ENCODE measurements at regions of chr9 and their contacts with region 1.

Region 1: DNA sequence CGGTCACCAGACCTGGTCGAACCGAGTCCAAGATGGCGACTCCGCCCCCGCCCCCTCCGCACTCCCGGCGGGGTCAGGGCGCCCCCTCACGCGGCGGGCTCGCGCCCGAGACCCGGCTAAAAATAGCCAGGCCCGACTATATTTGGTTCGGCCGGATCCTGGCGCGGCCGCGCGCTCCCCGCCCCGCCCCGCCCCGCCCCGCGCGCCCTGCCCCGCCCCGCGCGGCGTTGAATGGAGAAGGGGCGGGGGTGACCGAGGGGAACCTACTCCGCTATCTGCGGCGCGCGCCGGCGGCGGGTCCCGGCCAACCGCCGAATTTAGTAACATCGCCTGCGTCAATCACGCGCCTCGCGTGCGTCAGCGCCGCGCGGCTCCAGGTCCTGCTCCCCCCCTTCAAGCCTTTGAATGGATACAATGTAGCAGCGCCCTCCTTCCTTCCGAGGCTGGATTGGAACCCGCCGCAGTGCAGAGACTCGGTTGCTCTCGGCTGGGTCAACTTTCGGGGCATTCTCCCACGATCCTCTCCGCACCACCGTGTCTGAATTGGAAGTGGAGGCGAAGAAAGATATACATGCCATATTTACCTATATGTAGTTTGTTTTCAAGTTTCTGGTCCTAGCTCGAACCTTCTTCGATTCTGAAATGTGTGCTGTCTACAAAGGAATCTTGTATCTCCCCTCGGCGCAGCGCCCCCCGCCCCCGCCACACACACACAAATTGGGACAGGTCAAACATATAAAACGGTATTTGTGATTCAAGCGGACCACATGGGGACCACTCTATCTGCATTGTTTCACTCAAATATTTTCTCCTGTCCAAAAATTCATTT is 1.6 kb upstream of the NR4A3 start:
- DNase-seq: peak; percentile 89 to 94 (median 92)
- ATAC-seq: peak; percentile 72
- H3K4me3 ChIP-seq: peak overlapping the region; percentile 57 to 74
- H3K27ac ChIP-seq: peak overlapping the region; percentile 95 to 99 (median 98)
- H3K4me1 ChIP-seq: peaks cover 39% of the 10 kb centered on the region
- H3K27me3 ChIP-seq: peaks cover 0 to 8% of the 10 kb centered on the region in 2 donors
- CTCF ChIP-seq: no peak
- POLR2A ChIP-seq: peak in 1 of 3 donors; percentile 33

Region 2: GRCh38 chr9:99221621-99222415 is 598.3 kb before region 1 on chr9 and contains the starts of genes ALG2 and SEC61B:
- intact Hi-C with region 1: loop called (anchors 10 kb)
- DNase-seq: peak; percentile 94 to 96 (median 96)
- ATAC-seq: peak; percentile 94
- H3K4me3 ChIP-seq: peak within 1 kb of the TSS; percentile 88 to 98
- H3K27ac ChIP-seq: peak within 1 kb of the TSS; percentile 94 to 99 (median 96)
- H3K4me1 ChIP-seq: peaks cover 75% of the 10 kb centered on the region
- H3K27me3 ChIP-seq: no peaks in the 10 kb centered on the region
- CTCF ChIP-seq: peak in 4 of 7 experiments; percentile 18 to 26 (median 23)
- POLR2A ChIP-seq: peak; percentile 82 to 96 (median 94)
- total RNA-seq, gene ALG2: 52.1 to 58.6 TPM
- total RNA-seq, gene SEC61B: 86.6 to 104 TPM

Region 3: GRCh38 chr9:99762470-99762869 is 57.6 kb before region 1 on chr9:
- intact Hi-C with region 1: no loop called
- DNase-seq: no peak
- ATAC-seq: no peak
- H3K4me3 ChIP-seq: no peak overlapping the region
- H3K27ac ChIP-seq: no peak overlapping the region
- H3K4me1 ChIP-seq: no peaks in the 10 kb centered on the region
- H3K27me3 ChIP-seq: no peaks in the 10 kb centered on the region
- CTCF ChIP-seq: no peak
- POLR2A ChIP-seq: no peak

Region 4: GRCh38 chr9:99778308-99778707 is 41.8 kb before region 1 on chr9:
- intact Hi-C with region 1: no loop called
- DNase-seq: no peak
- ATAC-seq: no peak
- H3K4me3 ChIP-seq: no peak overlapping the region
- H3K27ac ChIP-seq: no peak overlapping the region
- H3K4me1 ChIP-seq: no peaks in the 10 kb centered on the region
- H3K27me3 ChIP-seq: no peaks in the 10 kb centered on the region
- CTCF ChIP-seq: no peak
- POLR2A ChIP-seq: no peak

Region 5: GRCh38 chr9:99906403-99907207 is 86.5 kb after region 1 on chr9 and contains the start of gene STX17:
- intact Hi-C with region 1: loop called (anchors 10 kb)
- DNase-seq: peak; percentile 75 to 84 (median 77)
- ATAC-seq: peak; percentile 89
- H3K4me3 ChIP-seq: peak within 1 kb of the TSS; percentile 47 to 91
- H3K27ac ChIP-seq: peak within 1 kb of the TSS; percentile 94 to 100 (median 98)
- H3K4me1 ChIP-seq: peaks cover 18% of the 10 kb centered on the region
- H3K27me3 ChIP-seq: no peaks in the 10 kb centered on the region
- CTCF ChIP-seq: peak in 1 of 7 experiments; percentile 4
- POLR2A ChIP-seq: peak; percentile 82 to 93 (median 90)
- total RNA-seq, gene STX17: 29.8 to 73.2 TPM

Region 6: GRCh38 chr9:99977033-99977792 is 157.1 kb after region 1 on chr9:
- intact Hi-C with region 1: no loop called
- DNase-seq: no peak
- ATAC-seq: peak; percentile 50
- H3K4me3 ChIP-seq: no peak overlapping the region
- H3K27ac ChIP-seq: no peak overlapping the region
- H3K4me1 ChIP-seq: no peaks in the 10 kb centered on the region
- H3K27me3 ChIP-seq: no peaks in the 10 kb centered on the region
- CTCF ChIP-seq: no peak
- POLR2A ChIP-seq: no peak

Region 7: DNA sequence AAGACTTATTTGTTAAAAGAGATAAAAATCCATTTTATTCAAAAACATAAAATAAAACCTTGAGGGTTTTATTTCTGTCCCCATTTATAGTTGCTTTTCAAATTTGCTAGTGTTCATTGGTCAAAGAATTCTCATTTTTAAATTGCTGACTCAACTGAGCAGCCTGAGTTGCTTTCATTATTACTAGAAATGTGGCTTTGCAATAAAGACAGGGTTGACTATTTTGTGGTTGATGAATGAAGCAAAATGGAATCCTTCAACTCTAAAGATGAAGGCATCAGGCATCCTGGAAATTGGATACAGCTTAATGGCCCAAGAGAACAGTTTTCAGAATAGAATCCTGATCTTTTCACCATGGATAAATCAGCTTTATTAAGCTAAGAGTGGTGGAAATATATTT is 1798.6 kb after region 1 on chr9:
- intact Hi-C with region 1: no loop called
- DNase-seq: no peak
- ATAC-seq: no peak
- H3K4me3 ChIP-seq: no peak overlapping the region
- H3K27ac ChIP-seq: no peak overlapping the region
- H3K4me1 ChIP-seq: no peaks in the 10 kb centered on the region
- H3K27me3 ChIP-seq: no peaks in the 10 kb centered on the region
- CTCF ChIP-seq: no peak
- POLR2A ChIP-seq: no peak

Measured in body of pancreas (tissue), 4 donors.